AG04449 (cell line): ENCODE measurements at regions of chr6 and their contacts with region 1.

Region 1: DNA sequence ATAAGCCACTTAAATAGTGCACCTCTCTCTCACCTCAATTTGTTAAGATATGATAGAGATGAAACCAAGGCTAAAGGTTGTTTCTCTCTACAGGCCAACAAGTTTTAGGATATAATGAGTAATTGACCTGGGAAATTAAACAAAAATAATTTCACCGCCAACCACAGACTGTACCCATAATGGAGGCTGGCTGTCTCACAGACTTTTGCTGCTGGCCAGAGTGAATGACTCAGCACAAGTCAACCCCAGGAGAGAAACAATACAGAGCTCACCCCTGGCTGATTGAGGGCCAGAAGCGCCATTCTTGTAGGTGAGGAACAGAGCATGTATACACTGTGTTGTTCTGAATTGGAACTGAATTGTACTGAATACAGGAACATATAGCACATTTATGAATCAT is 99.9 kb downstream of the CAP2 start:
- DNase-seq: no peak
- H3K4me3 ChIP-seq: no peak overlapping the region
- CTCF ChIP-seq: no peak

Region 2: DNA sequence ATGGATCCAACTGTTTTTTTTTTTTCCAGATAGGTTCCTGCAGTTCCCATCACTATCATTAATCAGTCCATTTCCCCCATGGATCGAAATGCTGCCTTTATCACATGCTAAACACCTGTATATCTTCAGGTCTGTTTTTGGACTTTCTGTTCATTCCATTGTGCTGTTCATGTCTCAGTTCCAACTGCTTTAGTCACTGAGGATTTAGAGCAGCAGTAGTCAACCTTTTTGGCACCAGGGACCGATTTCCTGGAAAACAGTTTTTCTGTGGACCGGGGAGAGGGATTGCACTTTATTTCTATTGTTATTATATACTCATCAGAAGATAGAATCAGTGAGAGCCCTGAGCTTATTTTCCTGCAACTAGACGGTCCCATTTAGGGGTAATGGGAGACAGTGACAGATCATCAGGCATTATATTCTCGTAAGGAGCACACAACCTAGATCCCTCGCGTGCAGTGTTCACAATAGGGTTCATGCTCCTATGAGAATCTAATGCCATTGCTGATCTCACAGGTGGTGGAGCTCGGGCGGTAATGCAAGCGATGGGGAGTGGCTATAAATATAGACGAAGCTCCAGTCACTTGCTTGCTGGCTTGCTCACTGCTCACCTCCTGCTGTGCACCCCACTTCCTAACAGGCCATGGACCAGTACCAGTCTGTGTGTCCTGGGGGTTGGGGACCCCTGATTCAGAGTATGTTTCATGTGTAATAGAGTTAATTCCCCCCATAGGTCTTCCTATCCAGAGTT is 53.9 kb before region 1 on chr6:
- CTCF ChIA-PET with region 1: no interaction called
- POLR2A ChIA-PET with region 1: no interaction called
- DNase-seq: no peak
- H3K4me3 ChIP-seq: no peak overlapping the region
- CTCF ChIP-seq: no peak

Region 3: DNA sequence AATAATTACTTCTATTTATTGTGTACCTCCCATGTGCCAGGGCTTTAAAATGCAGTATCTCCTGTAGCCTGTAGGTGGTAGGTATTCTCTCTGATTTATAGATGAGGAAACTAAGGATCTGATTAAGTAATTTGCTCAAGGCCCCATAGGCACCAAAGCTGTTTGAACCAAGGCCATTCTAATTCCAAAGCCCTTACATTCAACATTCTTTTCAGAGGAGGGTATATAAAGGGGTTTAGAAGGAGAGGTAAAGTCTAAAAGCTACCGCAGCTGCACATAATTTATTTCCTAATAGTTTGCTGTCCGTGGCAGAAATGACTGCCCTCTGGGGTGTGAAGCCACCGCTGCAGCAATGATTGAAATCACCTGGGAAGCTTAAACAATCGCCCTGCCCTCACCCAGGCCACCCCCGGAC is 11.8 kb after region 1 on chr6:
- CTCF ChIA-PET with region 1: interaction called, 25 read pairs
- POLR2A ChIA-PET with region 1: interaction called, 3 read pairs
- DNase-seq: no peak
- H3K4me3 ChIP-seq: no peak overlapping the region
- CTCF ChIP-seq: peak; percentile 38